MCF 10A (cell line): ENCODE measurements at regions of chr9 and their contacts with region 1.

Region 1: DNA sequence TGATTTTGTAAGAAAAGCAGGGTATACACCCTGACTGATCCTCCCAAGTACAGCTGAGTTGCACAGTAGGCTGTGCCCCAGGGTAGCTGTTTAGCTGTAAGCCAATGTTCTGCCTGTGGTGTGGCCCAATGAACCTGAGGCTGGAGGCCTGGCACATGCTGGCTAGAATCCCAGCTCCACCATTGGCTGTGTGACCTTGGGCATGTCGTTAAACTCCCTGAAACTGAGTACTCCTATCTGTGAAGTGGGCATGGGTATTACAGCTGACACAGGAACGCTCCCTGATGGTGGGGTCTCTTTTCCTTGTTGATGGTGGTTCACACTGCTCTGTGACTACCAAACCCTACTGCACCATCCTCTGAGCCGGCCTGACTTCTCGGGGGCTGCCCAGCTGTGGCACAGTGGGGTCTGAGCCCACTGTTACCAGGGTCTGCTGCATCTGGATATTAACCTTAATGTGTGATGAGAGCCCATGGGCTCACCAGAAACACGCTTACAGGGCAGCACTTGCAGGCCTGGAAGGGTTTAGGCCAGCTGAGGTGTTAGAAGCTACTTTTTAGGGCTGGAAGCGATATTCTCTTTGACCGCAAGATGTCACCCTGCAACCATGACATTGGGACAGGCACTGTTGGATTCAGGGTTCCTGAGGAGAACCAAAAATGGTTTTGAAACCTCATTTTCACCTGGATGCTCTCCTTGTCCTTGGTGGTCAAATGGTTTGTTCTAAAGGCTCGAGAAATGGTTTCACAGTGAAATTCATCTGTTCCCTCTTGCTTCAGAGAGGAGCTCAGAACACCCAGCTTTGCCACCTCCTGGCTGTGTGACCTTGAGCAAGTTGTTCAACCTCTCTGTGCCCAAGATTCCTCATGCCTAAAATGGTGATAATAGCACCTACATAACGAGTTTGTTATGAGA is 6.8 kb upstream of the GADD45G start:
- DNase-seq: peak; percentile 78
- H3K4me3 Mint-ChIP-seq: no peak overlapping the region
- H3K27ac Mint-ChIP-seq: no peak overlapping the region
- H3K4me1 Mint-ChIP-seq: peaks cover 4% of the 10 kb centered on the region
- H3K27me3 Mint-ChIP-seq: peaks cover 60% of the 10 kb centered on the region
- CTCF ChIP-seq: peak; percentile 74

Region 2: GRCh38 chr9:89340332-89340731 is 257.6 kb before region 1 on chr9:
- CTCF ChIA-PET with region 1: no interaction called
- POLR2A ChIA-PET with region 1: no interaction called
- intact Hi-C with region 1: no loop called
- DNase-seq: no peak
- H3K4me3 Mint-ChIP-seq: no peak overlapping the region
- H3K27ac Mint-ChIP-seq: no peak overlapping the region
- H3K4me1 Mint-ChIP-seq: no peaks in the 10 kb centered on the region
- H3K27me3 Mint-ChIP-seq: no peaks in the 10 kb centered on the region
- CTCF ChIP-seq: no peak

Region 3: DNA sequence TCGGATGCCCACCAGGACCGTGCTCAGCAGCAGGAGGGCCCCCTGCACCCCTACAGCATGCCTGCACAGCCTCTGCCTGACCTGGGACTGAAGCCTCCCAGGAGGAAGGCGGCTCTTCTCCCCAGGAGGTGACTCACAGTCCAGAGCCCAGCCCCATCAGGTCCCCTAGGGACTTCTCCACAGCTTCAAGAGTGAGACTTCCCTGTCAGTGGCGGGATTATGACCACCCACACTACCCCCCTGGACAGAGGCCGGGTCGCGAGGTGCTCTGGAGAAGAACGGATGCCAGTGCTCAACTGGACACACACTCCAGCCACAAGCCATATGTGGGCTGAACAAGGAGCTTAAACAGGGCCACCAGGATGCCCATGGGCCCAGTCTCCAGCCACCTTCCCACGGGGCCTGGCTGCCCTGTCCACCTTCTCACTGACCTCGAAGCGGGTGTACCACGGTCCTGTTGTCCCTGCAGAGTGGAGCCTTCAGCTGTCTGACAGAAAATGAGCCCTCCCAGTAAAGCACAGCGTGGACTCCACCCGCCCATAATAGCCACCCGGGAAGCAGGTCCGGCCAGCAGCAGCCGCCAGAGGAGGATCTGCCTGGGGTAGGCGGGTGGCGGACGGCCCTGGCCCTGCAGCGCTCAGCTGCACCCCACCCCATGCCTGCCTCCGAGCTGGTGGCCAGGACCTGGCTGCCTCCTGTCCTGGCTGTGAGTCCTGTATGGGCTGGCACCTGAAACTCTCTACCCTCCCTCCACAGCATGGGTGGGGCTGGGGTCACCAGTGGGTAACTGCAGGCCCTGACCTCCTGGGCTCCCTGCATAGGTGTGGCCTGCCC is 154.8 kb before region 1 on chr9:
- CTCF ChIA-PET with region 1: no interaction called
- POLR2A ChIA-PET with region 1: no interaction called
- intact Hi-C with region 1: no loop called
- DNase-seq: peak; percentile 11
- H3K4me3 Mint-ChIP-seq: no peak overlapping the region
- H3K27ac Mint-ChIP-seq: no peak overlapping the region
- H3K4me1 Mint-ChIP-seq: peaks cover 8% of the 10 kb centered on the region
- H3K27me3 Mint-ChIP-seq: no peaks in the 10 kb centered on the region
- CTCF ChIP-seq: no peak

Region 4: DNA sequence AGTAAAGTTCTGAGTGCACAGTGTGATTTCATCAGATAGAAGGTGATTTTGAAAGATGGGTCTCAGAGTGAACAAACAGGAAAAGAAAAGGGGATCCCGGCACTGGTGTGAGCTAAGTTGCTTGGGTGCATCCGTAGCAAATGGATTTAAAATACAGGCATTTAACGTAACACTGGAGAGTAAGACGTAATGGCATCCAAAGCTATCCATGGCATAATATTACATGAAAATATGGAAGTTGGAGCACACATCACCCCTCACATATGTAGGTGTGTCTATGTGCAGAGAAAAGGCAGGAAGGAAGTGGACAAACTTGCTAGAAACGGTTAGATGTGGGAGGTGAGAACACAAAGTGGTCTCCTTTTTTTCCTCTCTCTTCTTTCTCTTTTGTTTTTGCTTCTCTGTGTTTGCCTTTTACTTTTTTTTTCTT is 61.8 kb before region 1 on chr9:
- CTCF ChIA-PET with region 1: no interaction called
- POLR2A ChIA-PET with region 1: no interaction called
- intact Hi-C with region 1: no loop called
- DNase-seq: no peak
- H3K4me3 Mint-ChIP-seq: no peak overlapping the region
- H3K27ac Mint-ChIP-seq: no peak overlapping the region
- H3K4me1 Mint-ChIP-seq: no peaks in the 10 kb centered on the region
- H3K27me3 Mint-ChIP-seq: no peaks in the 10 kb centered on the region
- CTCF ChIP-seq: no peak

Region 5: GRCh38 chr9:89576404-89576839 is 21.5 kb before region 1 on chr9:
- CTCF ChIA-PET with region 1: interaction called, 25 read pairs
- POLR2A ChIA-PET with region 1: no interaction called
- intact Hi-C with region 1: no loop called
- DNase-seq: peak; percentile 56
- H3K4me3 Mint-ChIP-seq: no peak overlapping the region
- H3K27ac Mint-ChIP-seq: no peak overlapping the region
- H3K4me1 Mint-ChIP-seq: no peaks in the 10 kb centered on the region
- H3K27me3 Mint-ChIP-seq: peaks cover 89% of the 10 kb centered on the region
- CTCF ChIP-seq: peak; percentile 74

Region 6: DNA sequence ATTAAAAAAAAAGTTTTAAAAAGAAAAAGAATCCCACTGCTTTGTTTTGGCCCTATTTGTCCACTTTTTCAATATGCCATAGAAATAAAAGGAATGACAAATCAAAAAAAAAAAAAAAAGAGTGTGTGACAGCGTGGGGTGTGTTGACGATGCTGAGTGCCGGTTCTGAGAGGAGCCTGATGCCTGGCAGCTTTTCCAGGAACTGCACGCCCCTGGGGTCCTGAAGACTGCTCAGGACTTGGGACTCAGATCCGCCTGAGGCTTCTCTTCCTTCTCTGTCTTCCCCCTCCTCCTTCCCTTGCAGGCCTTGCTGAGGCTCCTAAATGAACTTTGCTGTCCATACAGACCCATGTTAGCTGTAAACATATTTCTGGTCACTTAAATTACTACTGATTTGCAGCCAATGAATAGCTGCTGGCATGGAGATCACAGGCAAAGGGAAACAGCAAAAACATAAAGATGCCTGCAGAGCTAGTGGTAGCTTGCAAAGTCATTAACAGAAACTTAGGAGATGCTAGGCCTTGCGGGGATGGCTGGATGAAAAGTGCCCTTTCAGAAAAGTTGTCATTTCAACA is 268.6 kb after region 1 on chr9:
- CTCF ChIA-PET with region 1: no interaction called
- POLR2A ChIA-PET with region 1: no interaction called
- intact Hi-C with region 1: no loop called
- DNase-seq: no peak
- H3K4me3 Mint-ChIP-seq: no peak overlapping the region
- H3K27ac Mint-ChIP-seq: no peak overlapping the region
- H3K4me1 Mint-ChIP-seq: no peaks in the 10 kb centered on the region
- H3K27me3 Mint-ChIP-seq: peaks cover 14% of the 10 kb centered on the region
- CTCF ChIP-seq: no peak

Region 7: GRCh38 chr9:89999534-90000370 is 401.8 kb after region 1 on chr9:
- CTCF ChIA-PET with region 1: interaction called, 26 read pairs
- POLR2A ChIA-PET with region 1: interaction called, 5 read pairs
- intact Hi-C with region 1: loop called (anchors 1 kb)
- DNase-seq: peak; percentile 55
- H3K4me3 Mint-ChIP-seq: no peak overlapping the region
- H3K27ac Mint-ChIP-seq: peak overlapping the region; percentile 5
- H3K4me1 Mint-ChIP-seq: peaks cover 6% of the 10 kb centered on the region
- H3K27me3 Mint-ChIP-seq: no peaks in the 10 kb centered on the region
- CTCF ChIP-seq: no peak

Region 8: DNA sequence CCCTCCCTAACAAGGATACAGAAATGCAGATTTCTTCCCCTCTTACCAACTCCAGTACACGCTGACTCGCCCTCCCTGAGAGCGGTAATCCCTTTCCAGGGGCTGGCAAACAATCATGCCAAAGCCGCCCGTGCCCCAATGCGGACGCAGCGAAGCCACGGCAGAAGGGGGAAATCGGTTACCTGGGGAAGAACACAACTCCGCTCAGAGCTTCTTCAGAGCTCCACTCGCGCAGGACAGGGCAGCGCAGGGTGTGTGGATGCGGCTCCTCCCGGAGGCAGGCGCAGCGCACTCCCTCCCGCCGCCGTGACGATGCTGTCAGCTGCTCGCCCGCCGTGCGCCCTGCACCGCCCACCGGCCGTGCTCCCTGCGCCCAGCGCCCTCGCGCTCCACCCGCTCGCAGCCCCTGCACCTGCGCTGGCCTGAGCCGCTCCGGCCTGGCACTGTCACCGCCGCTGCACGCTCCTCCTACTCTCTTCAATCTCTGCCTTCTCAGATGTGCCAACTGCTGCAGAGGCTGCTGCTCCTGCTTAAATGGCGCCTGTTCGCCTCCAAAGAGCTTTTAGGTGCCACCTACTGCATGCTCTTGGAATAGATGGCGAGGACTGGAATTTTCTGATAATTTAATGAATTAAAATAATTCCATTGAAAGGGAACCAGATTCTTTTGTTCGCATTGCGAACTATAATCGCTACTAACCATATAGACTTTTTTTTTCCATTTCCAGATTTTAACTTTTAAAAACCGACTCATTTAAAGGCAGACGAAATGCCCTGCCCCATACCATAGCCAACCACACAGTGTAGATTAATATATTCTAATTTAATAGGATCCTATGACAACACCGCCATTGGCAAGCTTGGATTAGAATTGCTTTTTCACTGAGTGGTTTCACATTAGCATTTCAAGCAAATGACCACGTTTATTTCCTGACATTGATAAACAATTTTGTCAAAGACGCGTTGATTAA is 1044.9 kb after region 1 on chr9 and contains the start of gene DIRAS2:
- CTCF ChIA-PET with region 1: no interaction called
- POLR2A ChIA-PET with region 1: no interaction called
- intact Hi-C with region 1: loop called (anchors 5 kb)
- DNase-seq: peak; percentile 33
- H3K4me3 Mint-ChIP-seq: peak within 1 kb of the TSS; percentile 69
- H3K27ac Mint-ChIP-seq: no peak within 1 kb of the TSS
- H3K4me1 Mint-ChIP-seq: no peaks in the 10 kb centered on the region
- H3K27me3 Mint-ChIP-seq: peaks cover 100% of the 10 kb centered on the region
- CTCF ChIP-seq: peak; percentile 41
- total RNA-seq, gene DIRAS2: not detected in 2 replicates